Cardiac septum (tissue), 1 donor: ENCODE measurements at regions of chr4 and their contacts with region 1.

Region 1: GRCh38 chr4:22434895-22435294 is 81.0 kb downstream of the ADGRA3 start:
- DNase-seq: no peak

Region 2: GRCh38 chr4:22500831-22501719 is 66.2 kb after region 1 on chr4:
- intact Hi-C with region 1: no loop called
- DNase-seq: no peak

Region 3: GRCh38 chr4:22607382-22607781 is 172.5 kb after region 1 on chr4:
- intact Hi-C with region 1: loop called (anchors 5 kb)
- DNase-seq: no peak

Region 4: DNA sequence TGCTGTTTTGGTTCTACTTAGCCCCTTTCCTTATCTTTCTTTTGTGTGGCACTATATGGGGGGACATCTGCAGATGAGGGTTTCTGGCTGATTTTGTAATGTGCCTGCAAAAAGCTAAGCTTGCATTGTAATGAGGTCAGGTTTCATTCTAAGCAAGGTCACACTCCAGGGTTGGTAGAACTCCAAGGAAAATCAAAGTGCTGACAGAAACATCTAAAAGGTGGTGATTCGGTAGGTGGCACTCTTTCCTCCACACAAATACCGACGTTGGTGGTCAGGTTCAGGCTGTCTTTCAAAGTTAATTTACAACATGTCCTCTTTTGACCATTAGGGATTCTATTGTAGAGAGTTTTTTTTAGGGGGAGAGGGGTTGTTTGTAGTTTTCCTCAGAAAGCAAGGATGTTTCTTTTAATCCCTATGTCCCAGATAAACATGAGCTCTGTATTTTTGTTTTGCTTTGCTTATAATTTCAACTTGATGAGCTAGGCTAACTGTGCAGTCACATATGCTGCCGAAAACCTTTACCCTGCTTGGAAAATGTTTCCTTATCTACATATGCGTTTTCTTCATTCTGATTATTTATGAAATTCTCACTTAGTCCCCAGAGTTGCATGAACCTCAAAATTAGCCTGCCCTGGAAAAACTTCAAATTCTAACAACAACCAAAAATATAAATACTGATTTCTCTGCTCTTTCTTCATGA is 1020.7 kb after region 1 on chr4:
- intact Hi-C with region 1: no loop called
- DNase-seq: no peak